ENCODE measurements at regions of chr6 and their contacts with region 1.

Region 1: GRCh38 chr6:108835218-108835850 is 12.9 kb upstream of the ARMC2 start:
- DNase-seq: peak; percentile 92
- H3K4me3 ChIP-seq: no peak overlapping the region
- H3K27ac ChIP-seq: no peak overlapping the region
- H3K4me1 ChIP-seq: peaks cover 0 to 8% (median 0%) of the 10 kb centered on the region in 4 donors
- H3K27me3 ChIP-seq: no peaks in the 10 kb centered on the region
- CTCF ChIP-seq: peak; percentile 91 to 97 (median 96)
- EP300 ChIP-seq: no peak
- POLR2A ChIP-seq: no peak

Region 2: DNA sequence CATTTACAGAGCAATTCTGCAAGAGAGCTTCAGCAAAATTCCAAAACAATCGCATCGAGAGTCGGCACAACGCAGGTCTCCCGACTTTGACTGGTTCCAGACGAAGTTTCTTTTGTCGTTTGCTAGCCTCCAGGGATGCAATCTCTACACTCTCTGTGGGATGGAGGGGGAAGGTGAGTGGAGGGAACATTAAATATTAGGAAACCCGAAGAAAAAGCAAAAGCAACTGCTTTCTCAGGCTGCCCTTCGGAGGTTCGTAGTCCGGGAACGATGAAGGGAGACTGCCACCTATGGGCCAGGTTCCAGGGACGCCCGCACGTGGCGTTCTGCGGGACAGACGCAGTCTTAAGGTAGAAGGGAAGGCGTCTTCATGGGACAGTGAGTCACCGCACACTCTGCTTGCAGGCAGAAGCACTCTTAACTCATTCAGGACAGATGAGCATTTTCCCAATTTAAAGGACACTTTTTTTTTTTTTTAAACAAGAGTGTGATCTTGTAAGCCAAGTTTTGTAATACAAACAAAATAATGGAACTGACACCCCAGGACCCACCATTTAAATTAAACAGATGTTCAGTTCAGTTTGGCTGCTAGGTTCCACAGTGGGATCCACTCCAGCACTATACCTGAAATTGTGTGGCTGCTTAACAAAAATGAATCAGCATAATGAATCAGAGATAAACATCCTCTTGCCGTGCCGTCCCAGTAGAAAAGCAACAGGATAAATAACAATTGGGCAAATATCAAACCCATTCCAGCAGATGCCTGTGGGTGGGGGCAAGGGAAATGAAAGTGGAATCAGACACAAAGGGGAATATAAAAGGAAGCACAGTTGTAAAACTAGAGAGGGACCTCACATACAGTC is 52.9 kb before region 1 on chr6:
- in situ Hi-C with region 1: no loop called
- intact Hi-C with region 1: loop called (anchors 5 kb)
- DNase-seq: peak; percentile 92
- H3K4me3 ChIP-seq: peak overlapping the region; percentile 34 to 54 (median 42)
- H3K27ac ChIP-seq: peak overlapping the region; percentile 46 to 80 (median 68)
- H3K4me1 ChIP-seq: peaks cover 5 to 19% (median 9%) of the 10 kb centered on the region in 4 donors
- H3K27me3 ChIP-seq: no peaks in the 10 kb centered on the region
- CTCF ChIP-seq: peak; percentile 71 to 88 (median 79)
- EP300 ChIP-seq: no peak
- POLR2A ChIP-seq: no peak

Region 3: DNA sequence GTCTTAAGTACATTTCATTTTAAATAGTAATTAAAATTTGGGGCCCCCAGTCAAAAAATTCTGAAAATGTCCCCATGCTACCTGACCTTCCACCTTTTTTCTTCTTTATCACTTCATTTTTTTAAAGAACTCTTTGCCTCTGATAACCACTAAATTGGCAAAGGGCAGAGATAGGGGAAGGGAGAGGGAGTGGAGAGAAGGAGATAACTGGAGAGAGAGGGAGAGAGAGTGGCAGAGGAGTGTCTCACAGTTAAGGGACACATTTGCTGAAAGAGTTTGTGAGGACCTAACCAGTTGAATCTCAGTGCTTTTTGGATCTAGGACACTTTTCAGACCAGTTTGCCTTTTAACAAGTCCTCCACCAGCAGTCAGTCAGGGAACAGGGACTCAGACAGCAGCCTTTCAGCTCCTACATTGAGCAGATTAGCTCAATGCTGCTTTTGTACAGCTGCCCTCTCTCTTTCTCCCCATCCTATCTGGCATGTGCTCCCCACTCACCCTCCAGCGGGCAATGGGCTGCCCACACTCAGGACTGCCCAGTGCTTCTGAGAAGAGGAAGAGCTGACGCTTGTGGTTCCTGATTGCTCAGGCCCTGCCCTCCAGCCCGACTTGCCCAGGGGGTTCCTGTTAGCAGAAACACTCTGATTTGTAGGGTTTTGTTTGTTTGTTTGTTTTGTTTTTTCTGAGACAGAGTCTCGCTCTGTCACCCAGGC is 27.3 kb after region 1 on chr6:
- in situ Hi-C with region 1: no loop called
- intact Hi-C with region 1: no loop called
- DNase-seq: peak; percentile 32
- H3K4me3 ChIP-seq: no peak overlapping the region
- H3K27ac ChIP-seq: no peak overlapping the region
- H3K4me1 ChIP-seq: no peaks in the 10 kb centered on the region
- H3K27me3 ChIP-seq: no peaks in the 10 kb centered on the region
- CTCF ChIP-seq: no peak
- EP300 ChIP-seq: no peak
- POLR2A ChIP-seq: no peak

Region 4: DNA sequence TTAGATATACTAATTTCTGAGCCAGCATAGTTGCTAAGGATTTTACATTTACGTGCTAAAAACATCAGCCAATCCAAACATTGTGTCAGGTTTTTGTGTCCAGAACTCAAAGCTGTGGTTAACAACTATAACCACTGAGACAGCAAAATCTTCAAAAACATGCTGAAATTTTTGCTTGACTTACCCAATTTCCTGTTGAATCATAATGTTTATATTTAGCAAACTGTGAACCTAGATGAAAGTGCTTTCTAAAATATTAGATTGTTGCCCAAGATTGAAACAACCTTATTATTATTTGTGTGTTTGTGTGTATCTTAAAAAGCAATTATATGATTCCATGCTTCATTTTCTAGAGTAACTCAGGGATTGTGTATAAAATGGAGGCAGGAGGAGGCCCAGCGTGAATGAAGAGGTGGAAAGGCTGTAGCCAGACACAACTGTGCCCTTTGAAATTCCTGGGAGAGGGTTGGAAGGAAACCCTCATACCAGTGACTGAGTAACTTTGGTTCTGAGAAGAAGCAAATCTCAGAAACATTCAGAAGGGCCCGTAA is 60.9 kb after region 1 on chr6:
- in situ Hi-C with region 1: loop called in 1 of 4 experiments (anchors 5 kb)
- intact Hi-C with region 1: no loop called
- DNase-seq: no peak
- H3K4me3 ChIP-seq: no peak overlapping the region
- H3K27ac ChIP-seq: peak overlapping the region; percentile 9 to 61 (median 48)
- H3K4me1 ChIP-seq: peaks cover 3 to 13% (median 7%) of the 10 kb centered on the region in 4 donors
- H3K27me3 ChIP-seq: no peaks in the 10 kb centered on the region
- CTCF ChIP-seq: no peak
- EP300 ChIP-seq: no peak
- POLR2A ChIP-seq: no peak

Region 5: DNA sequence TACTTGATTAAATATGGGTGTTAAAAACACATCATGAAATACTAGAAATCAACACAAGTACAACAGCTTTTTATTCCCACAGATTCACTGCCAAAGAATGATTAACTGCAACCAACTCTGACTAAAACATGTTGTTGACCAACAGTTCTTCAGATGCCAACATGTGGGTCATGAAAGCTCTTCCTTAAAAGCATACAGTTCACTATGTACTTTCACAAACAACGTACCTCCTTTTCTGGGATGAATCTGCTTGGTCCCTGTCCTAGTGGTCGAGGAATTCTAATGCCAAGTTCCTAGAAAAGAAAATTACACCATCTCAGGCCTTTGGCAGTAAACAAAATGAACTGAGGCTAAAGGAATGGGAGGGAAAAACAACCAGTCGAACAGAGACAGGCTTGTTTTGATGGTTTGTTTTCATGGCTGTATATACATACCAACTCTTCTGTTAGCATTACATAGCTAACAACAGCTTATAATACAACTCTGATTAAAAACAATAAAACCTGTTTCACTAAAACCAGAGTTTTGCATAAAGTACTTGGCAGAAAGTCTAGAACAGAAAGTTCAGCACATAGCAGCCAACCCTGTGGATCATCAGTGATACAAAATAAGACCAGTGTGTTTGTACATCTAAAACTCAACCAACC is 166.8 kb after region 1 on chr6:
- in situ Hi-C with region 1: no loop called
- intact Hi-C with region 1: no loop called
- DNase-seq: no peak
- H3K4me3 ChIP-seq: peak overlapping the region in 1 of 4 donors; percentile 20
- H3K27ac ChIP-seq: peak overlapping the region; percentile 78 to 98 (median 88)
- H3K4me1 ChIP-seq: peaks cover 26 to 67% (median 45%) of the 10 kb centered on the region in 4 donors
- H3K27me3 ChIP-seq: no peaks in the 10 kb centered on the region
- CTCF ChIP-seq: no peak
- EP300 ChIP-seq: peak; percentile 57
- POLR2A ChIP-seq: no peak

Region 6: GRCh38 chr6:109349419-109350078 is 514.2 kb after region 1 on chr6:
- in situ Hi-C with region 1: no loop called
- intact Hi-C with region 1: no loop called
- DNase-seq: peak; percentile 70
- H3K4me3 ChIP-seq: no peak overlapping the region
- H3K27ac ChIP-seq: peak overlapping the region; percentile 69 to 86 (median 83)
- H3K4me1 ChIP-seq: peaks cover 23 to 64% (median 49%) of the 10 kb centered on the region in 4 donors
- H3K27me3 ChIP-seq: no peaks in the 10 kb centered on the region
- CTCF ChIP-seq: no peak
- EP300 ChIP-seq: no peak
- POLR2A ChIP-seq: peak; percentile 34

Measured in transverse colon (tissue), 4 donors.